Heart right ventricle (tissue), 16 donors: ENCODE measurements at regions of chr18 and their contacts with region 1.

Region 1: DNA sequence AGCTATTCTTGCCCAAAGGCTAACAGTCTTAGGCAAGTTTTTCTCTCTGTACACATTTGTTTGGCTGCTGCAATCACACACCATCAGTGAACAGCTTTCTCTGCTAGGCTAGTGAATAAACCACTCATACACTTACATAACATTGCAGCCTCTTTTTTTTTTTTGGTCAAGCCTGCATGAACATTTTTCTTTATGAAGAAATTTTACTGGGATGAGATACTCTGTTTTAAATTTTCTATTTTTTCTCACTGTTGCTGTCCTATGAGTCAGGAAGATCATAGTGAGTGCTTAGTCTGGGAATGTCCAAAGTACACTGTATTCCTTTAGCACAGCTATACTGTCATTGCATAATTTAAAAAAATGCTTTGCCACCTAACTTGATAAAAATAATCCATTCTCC is 58.5 kb downstream of the ROCK1 start:
- DNase-seq: no peak
- ATAC-seq: peak in 7 of 8 donors; percentile 28 to 90 (median 48)
- H3K4me3 ChIP-seq: no peak overlapping the region
- H3K27ac ChIP-seq: no peak overlapping the region
- H3K4me1 ChIP-seq: peaks cover 0 to 68% (median 51%) of the 10 kb centered on the region in 9 donors
- H3K27me3 ChIP-seq: no peaks in the 10 kb centered on the region
- CTCF ChIP-seq: no peak

Region 2: DNA sequence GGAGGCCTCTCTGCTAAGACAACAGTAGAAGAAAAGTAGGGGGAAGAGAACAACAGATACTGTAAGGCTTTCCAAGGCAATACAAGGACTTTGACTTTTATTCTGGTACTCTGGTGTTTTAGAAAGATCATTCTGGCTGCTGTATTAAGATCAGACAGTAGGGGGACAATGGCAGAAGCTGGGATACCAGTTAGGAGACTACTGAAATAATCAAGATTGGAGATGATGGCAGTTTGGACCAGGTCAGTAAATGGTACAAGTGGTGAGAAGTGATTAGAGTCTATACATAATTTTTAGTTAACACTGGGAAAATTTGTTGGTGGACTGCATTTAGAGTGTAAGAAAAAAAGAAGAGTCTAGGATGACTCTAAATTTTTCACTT is 81.2 kb before region 1 on chr18:
- intact Hi-C with region 1: loop called in 1 of 10 experiments (anchors 10 kb)
- DNase-seq: no peak
- ATAC-seq: no peak
- H3K4me3 ChIP-seq: no peak overlapping the region
- H3K27ac ChIP-seq: no peak overlapping the region
- H3K4me1 ChIP-seq: no peaks in the 10 kb centered on the region
- H3K27me3 ChIP-seq: no peaks in the 10 kb centered on the region
- CTCF ChIP-seq: peak in 8 of 9 donors; percentile 19 to 56 (median 43)

Region 3: DNA sequence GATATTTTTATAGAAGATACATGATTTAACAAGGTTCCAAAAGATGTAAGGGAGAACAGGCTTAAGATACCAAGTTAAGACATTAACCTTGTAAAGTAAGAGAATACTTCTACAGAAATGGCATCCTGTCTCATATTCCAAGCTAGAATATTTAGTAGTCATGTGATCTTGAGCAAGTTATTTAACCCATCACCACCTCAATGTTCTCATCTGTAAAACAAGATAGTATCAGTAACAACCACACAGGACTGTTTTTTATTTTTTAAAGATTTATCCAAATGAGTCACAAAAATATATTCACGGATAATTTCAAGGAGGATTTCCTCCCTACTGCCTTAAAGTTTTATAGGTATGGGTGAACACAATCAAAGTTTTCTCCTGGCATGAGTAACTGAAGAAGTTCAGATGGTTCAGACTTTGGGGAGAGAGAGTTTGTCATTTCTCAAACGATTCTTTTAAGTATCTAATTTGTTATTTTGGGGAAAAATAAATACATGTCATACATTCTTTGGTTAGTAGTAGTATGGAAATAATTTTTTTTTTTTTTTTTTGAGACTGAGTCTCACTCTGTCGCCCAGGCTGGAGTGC is 32.5 kb after region 1 on chr18:
- intact Hi-C with region 1: loop called in 1 of 10 experiments (anchors 5 kb)
- DNase-seq: no peak
- ATAC-seq: no peak
- H3K4me3 ChIP-seq: no peak overlapping the region
- H3K27ac ChIP-seq: no peak overlapping the region
- H3K4me1 ChIP-seq: peaks cover 0 to 15% (median 0%) of the 10 kb centered on the region in 9 donors
- H3K27me3 ChIP-seq: no peaks in the 10 kb centered on the region
- CTCF ChIP-seq: no peak

Region 4: DNA sequence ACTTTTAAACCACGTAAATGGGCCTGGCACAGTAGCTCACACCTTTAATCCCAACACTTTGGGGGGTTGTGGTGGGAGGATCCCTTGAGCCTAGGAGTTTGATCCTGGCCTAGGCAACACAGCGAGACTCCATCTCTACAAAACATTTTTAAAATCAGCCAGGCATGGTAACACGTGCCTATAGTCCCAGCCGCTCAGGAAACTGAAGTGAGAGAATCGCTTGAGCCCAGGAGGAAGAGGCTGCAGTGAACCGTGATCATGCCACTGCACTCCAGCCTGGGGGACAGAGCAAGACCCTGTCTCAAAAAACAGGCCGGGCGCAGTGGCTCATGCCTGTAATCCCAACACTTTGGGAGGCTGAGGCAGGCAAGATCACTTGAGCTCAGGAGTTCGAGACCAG is 46.3 kb after region 1 on chr18:
- intact Hi-C with region 1: loop called in 5 of 10 experiments (anchors 5 to 10 kb)
- DNase-seq: no peak
- ATAC-seq: no peak
- H3K4me3 ChIP-seq: no peak overlapping the region
- H3K27ac ChIP-seq: no peak overlapping the region
- H3K4me1 ChIP-seq: peaks cover 0 to 68% (median 44%) of the 10 kb centered on the region in 9 donors
- H3K27me3 ChIP-seq: no peaks in the 10 kb centered on the region
- CTCF ChIP-seq: no peak

Region 5: GRCh38 chr18:21179590-21180220 is 126.6 kb after region 1 on chr18:
- intact Hi-C with region 1: loop called in 1 of 10 experiments (anchors 10 kb)
- DNase-seq: peak in 1 of 2 donors; percentile 56
- ATAC-seq: peak in 7 of 8 donors; percentile 28 to 79 (median 64)
- H3K4me3 ChIP-seq: no peak overlapping the region
- H3K27ac ChIP-seq: no peak overlapping the region
- H3K4me1 ChIP-seq: peaks cover 0 to 5% (median 0%) of the 10 kb centered on the region in 9 donors
- H3K27me3 ChIP-seq: no peaks in the 10 kb centered on the region
- CTCF ChIP-seq: peak; percentile 55 to 79 (median 71)

Region 6: GRCh38 chr18:21242141-21242779 is 189.1 kb after region 1 on chr18 and contains the start of gene GREB1L:
- intact Hi-C with region 1: no loop called
- DNase-seq: peak; percentile 42 to 69
- ATAC-seq: peak; percentile 86 to 97 (median 94)
- H3K4me3 ChIP-seq: peak within 1 kb of the TSS; percentile 48 to 71 (median 66)
- H3K27ac ChIP-seq: peak within 1 kb of the TSS in 8 of 10 donors; percentile 12 to 77 (median 58)
- H3K4me1 ChIP-seq: peaks cover 0 to 21% (median 16%) of the 10 kb centered on the region in 9 donors
- H3K27me3 ChIP-seq: peaks cover 0 to 80% (median 46%) of the 10 kb centered on the region in 7 donors
- CTCF ChIP-seq: peak in 6 of 9 donors; percentile 19 to 58 (median 44)
- total RNA-seq, gene GREB1L: 2.7 to 14.3 (median 11.8) TPM

Region 7: DNA sequence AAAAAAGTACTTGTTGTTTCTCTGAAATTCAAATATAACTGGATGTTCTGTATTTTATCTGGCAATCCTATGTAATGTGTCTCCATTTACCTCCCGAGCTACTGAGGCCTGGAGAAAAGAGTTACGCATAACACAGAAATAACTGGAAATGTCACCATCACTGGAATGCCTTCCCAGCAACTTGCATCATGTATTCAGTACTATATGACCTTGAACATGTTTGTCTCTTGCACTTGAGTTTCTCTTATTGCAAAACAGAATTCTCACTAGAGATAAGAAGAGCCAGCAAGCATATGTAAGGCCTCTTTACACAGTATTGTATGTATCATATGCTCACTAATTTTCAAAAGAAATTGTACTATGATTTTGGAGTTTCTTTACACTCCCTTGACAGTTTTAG is 1464.2 kb after region 1 on chr18:
- intact Hi-C with region 1: loop called in 1 of 10 experiments (anchors 10 kb)
- DNase-seq: no peak
- ATAC-seq: peak in 6 of 8 donors; percentile 34 to 92 (median 66)
- H3K4me3 ChIP-seq: no peak overlapping the region
- H3K27ac ChIP-seq: peak overlapping the region in 2 of 10 donors; percentile 34 to 46
- H3K4me1 ChIP-seq: peaks cover 0 to 25% (median 18%) of the 10 kb centered on the region in 9 donors
- H3K27me3 ChIP-seq: no peaks in the 10 kb centered on the region
- CTCF ChIP-seq: no peak

Region 8: DNA sequence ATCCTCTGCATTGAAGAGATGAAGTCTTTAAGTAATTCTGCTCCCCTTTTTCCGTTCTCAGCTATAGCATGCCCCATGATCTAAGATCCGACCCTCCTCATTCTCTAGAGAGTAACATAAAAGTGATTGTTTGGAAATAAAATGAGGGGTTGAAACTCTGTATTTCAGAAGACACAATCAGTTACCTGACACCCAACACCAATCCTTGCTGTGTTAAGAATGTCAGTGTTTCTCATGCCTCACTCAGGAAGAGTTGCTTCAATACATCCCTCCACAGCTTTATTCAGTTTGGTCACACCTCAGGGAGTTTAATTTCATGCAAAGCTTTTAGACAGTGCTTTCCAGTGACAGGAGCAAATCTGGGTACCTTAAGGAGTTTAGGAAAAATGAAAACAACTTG is 1830.1 kb after region 1 on chr18:
- intact Hi-C with region 1: loop called in 1 of 10 experiments (anchors 5 kb)
- DNase-seq: no peak
- ATAC-seq: no peak
- H3K4me3 ChIP-seq: no peak overlapping the region
- H3K27ac ChIP-seq: no peak overlapping the region
- H3K4me1 ChIP-seq: no peaks in the 10 kb centered on the region
- H3K27me3 ChIP-seq: no peaks in the 10 kb centered on the region
- CTCF ChIP-seq: no peak